Testis (tissue), 5 donors: ENCODE measurements at regions of chr6 and their contacts with region 1.

Region 1: DNA sequence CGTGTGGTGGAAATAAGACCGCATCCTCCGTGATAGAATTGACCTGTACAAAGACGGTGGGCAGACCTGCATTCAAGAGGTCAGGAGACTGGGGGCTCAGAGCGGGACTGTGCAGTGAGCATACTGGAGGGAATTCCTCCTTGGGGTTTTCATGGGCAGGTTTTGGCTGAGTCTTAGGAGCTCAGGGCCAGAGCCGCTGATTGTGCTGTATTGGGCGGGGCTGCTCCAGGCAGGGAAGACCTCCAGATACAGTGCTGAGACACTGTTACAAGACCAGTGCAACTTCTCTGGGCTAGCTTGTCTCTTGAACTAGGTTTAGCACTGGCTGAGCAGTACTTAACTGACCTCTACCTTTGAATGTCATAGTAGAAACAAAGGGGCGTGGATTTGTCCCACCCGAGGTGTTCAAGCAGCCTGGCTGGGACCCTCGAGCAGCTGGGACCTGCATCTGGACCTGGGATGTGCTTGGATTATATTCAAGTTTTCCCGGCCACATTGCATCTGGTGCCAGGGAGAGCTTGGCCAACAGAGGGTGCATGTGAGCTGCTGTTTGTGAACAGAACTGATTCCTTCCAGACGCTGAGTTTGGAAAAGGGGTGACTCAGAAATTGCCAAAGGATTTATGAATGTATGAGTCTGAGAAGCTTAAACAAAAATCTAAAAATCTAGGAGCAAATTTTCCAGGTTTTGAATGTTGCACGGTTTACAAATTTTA is 33.4 kb upstream of the SLC22A1 start:
- DNase-seq: peak; percentile 78
- H3K4me3 ChIP-seq: no peak overlapping the region
- H3K27ac ChIP-seq: no peak overlapping the region
- H3K4me1 ChIP-seq: no peaks in the 10 kb centered on the region
- H3K27me3 ChIP-seq: no peaks in the 10 kb centered on the region
- CTCF ChIP-seq: peak; percentile 53 to 70 (median 68)
- POLR2A ChIP-seq: no peak

Region 2: DNA sequence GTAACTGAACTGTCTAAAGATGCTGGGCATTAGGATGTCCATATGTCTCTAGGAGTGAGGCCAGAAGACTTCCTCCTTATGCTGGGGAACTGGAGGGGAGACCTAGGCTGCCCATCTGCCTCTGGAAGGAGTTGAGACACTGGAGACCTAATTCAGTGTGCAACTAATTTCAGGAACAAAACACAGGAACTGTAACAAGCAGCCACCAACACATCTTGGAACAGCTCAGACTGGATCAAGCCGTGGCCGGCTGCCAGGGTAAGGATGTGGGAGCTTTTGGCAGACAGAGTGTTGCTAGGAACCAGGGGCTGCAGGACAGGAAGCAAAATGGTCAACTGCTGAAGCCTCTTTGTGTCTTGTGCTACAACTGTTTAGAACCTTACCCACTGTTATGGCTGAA is 213.8 kb before region 1 on chr6:
- intact Hi-C with region 1: loop called (anchors 10 kb)
- DNase-seq: peak; percentile 41
- H3K4me3 ChIP-seq: no peak overlapping the region
- H3K27ac ChIP-seq: no peak overlapping the region
- H3K4me1 ChIP-seq: no peaks in the 10 kb centered on the region
- H3K27me3 ChIP-seq: no peaks in the 10 kb centered on the region
- CTCF ChIP-seq: no peak
- POLR2A ChIP-seq: no peak

Region 3: DNA sequence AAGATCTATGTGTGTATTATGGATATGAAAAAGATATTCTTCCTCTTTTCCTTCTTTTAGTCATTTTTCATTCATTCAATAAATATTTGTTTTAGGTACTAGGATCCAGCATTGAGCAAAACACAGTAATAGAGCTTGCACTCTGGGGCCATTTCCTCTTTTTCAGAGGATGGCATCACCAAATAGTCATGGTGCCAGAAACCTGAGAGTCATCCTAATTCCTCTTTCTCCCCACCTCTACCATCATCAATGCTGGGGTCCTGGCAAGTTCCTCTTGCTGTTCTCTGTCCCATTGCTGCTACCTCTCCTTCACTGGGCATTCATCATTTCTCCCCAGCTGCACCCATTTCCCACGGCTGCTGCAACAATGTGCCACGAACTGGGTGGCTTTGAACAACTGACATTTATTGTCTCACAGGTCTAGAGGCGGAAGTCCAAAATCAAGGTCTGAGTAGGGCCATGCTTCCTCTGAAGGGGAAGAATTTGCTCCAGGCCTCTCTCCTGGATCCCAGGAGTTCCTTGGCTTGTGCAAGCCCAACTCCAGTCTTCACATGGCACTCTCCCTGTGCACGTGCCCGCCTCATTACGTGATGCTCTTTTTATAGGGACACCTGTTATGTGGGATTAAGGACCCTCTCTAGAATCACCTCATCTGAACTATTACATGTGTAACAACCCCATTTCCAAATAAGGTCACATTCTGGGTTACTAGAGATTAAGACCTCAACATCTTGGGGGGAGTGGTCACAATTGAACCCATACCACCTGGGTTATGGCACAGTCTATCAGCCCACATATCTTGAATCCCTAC is 128.9 kb before region 1 on chr6:
- intact Hi-C with region 1: no loop called
- DNase-seq: no peak
- H3K4me3 ChIP-seq: no peak overlapping the region
- H3K27ac ChIP-seq: peak overlapping the region in 1 of 2 donors; percentile 62
- H3K4me1 ChIP-seq: no peaks in the 10 kb centered on the region
- H3K27me3 ChIP-seq: no peaks in the 10 kb centered on the region
- CTCF ChIP-seq: no peak
- POLR2A ChIP-seq: no peak